Activated CD8-positive, alpha-beta T cell treated with anti-CD3 and anti-CD28 coated beads for 36 hours (primary cell): ENCODE measurements at regions of chr19 and their contacts with region 1.

Region 1: DNA sequence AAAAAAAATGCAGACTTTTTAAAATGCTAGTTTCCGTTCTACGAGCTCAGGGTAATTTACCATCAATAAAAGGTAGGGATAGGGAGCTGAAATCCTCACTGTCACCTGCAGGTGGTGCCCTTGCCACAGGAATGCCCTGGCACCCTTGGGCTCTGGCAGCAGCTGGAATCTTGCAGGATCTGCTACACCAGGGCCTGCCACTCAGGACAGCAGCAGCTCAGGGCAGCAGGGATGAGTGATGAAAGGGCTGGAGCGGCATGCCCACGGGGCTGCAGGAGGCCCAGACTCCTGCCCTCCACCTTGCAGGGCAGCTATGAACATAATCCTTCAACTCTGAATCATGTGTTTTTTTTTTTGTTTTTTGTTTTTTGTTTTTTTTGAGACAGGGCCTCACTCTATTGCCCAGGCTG is 54.0 kb downstream of the GNG7 start:
- DNase-seq: peak; percentile 83
- ATAC-seq: peak; percentile 87
- H3K4me3 Mint-ChIP-seq: no peak overlapping the region
- H3K27ac Mint-ChIP-seq: no peak overlapping the region
- H3K4me1 Mint-ChIP-seq: no peaks in the 10 kb centered on the region
- H3K27me3 Mint-ChIP-seq: no peaks in the 10 kb centered on the region
- CTCF ChIP-seq: peak; percentile 98

Region 2: GRCh38 chr19:2570394-2570825 is 78.1 kb before region 1 on chr19:
- CTCF ChIA-PET with region 1: no interaction called
- POLR2A ChIA-PET with region 1: no interaction called
- intact Hi-C with region 1: no loop called
- DNase-seq: no peak
- ATAC-seq: no peak
- H3K4me3 Mint-ChIP-seq: no peak overlapping the region
- H3K27ac Mint-ChIP-seq: no peak overlapping the region
- H3K4me1 Mint-ChIP-seq: peaks cover 12% of the 10 kb centered on the region
- H3K27me3 Mint-ChIP-seq: no peaks in the 10 kb centered on the region
- CTCF ChIP-seq: no peak

Region 3: DNA sequence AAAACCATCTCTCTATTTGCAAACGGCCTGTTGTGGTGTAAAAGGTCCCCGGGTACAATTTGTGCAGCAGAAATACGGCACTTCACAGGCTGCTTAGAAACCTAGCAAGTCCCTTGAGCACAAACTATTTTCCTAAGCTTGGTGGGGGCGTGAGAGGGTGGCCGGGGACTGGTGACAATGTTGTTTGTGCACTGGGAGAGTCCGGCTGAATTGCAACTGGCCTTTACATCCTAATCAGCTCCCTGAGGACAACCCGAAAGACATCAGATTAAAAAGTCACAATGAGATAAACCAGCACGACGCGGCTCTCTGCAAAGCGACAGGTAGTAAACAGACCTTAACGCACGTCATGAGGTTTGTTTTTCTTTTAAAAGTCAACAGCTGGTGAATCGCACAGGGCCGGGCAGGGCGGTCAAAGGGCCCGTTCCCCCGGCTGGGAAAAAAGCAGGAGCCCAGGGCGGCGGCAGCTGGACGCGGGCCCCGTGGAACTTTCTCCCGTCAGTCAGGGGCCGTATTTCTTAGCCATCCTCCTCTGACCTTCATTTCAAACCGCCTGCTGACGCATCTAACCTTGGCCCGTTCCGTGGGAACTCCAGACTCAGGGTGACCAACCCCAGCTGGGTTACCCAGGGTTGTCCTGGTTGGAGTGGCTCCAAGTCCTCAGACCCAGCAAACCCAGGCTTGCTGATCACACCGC is 60.3 kb before region 1 on chr19:
- CTCF ChIA-PET with region 1: no interaction called
- POLR2A ChIA-PET with region 1: no interaction called
- intact Hi-C with region 1: no loop called
- DNase-seq: no peak
- ATAC-seq: no peak
- H3K4me3 Mint-ChIP-seq: no peak overlapping the region
- H3K27ac Mint-ChIP-seq: no peak overlapping the region
- H3K4me1 Mint-ChIP-seq: no peaks in the 10 kb centered on the region
- H3K27me3 Mint-ChIP-seq: peaks cover 8% of the 10 kb centered on the region
- CTCF ChIP-seq: no peak

Region 4: DNA sequence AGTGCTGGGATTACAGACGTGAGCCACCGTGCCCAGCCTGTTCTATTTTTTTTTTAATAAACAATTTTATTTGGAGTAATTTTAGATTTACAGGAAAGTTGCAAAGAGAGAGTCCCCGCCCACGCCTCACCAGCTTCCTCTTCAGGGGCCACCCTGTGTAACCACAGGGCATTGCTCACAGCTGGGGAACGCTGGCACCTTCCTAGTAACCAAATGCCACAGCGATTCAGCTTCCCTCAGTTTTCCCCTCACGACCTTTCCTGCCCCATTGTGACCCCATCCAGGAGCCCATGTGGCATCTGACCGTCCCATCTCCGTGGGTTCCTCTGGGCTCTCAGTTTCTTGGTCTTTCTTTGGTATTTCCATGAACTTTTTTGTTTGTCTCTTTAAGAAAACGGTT is 29.9 kb before region 1 on chr19:
- CTCF ChIA-PET with region 1: interaction called, 11 read pairs
- POLR2A ChIA-PET with region 1: no interaction called
- intact Hi-C with region 1: no loop called
- DNase-seq: peak; percentile 95
- ATAC-seq: no peak
- H3K4me3 Mint-ChIP-seq: peak overlapping the region; percentile 42
- H3K27ac Mint-ChIP-seq: peak overlapping the region; percentile 86
- H3K4me1 Mint-ChIP-seq: peaks cover 65% of the 10 kb centered on the region
- H3K27me3 Mint-ChIP-seq: no peaks in the 10 kb centered on the region
- CTCF ChIP-seq: no peak

Region 5: DNA sequence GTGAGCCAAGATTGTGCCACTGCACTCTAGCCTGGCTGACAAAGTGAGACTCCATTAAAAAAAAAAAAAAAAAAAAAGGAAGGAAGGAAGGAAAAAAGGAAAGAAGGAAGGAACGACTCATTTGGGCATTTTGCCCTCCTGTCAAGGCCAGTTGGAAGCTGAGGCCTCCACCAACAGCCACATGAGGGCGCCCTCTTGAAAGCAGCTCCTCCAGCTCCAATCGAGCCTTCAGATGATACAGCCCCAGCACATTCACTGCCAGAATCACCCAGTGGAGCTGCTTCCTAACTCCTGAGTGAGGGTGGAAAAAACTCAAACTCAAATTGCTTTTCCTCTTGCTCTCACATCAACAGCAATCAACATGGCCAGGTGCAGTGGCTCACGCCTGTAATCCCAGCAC is 13.1 kb after region 1 on chr19:
- CTCF ChIA-PET with region 1: interaction called, 32 read pairs
- POLR2A ChIA-PET with region 1: no interaction called
- intact Hi-C with region 1: no loop called
- DNase-seq: peak; percentile 60
- ATAC-seq: no peak
- H3K4me3 Mint-ChIP-seq: no peak overlapping the region
- H3K27ac Mint-ChIP-seq: no peak overlapping the region
- H3K4me1 Mint-ChIP-seq: no peaks in the 10 kb centered on the region
- H3K27me3 Mint-ChIP-seq: no peaks in the 10 kb centered on the region
- CTCF ChIP-seq: no peak

Region 6: DNA sequence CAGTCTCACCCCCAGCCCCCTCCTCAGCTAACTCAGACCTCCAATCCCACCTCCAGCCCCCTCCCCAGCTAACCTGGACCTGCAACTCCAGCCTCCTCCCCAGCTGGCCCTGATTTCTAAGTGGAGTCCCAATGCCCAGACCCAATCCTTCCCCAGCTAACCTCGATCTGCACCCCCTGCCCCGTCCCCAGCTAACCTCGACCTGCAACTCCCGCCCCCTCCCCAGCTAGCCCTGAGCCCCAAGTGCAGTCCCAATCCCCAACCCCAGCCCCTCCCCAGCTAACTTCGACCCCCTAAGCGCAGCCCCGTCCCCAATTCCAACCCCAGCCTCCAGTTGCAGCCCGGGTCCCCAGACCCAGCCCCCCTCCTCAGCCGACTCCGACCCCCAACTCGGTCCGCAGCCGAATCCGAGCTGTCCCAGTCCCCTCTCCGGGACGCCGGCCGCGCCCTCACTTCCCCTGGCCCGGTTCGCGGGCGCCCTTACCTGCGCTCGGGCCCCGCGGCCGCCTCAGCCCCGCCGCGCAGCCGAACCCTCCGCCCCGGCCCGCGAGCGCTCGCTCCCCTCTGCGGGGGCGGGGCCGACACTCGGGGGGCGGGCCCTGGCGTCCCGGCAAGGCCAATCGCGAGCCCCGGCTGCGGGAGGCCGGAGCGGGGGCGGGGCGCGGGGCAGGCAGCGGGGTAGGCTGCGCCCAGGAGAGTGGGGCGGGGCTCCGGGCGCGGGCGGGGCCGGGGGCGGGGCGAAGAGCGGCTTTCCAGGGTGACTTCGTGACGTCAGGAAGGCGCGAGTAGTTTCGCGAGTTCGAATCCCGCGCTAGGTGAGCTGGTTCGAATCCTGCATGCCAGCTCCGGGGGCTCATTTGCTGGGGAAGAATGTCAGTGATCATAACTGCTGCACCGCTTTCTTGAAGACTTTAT is 53.9 kb after region 1 on chr19 and contains the start of gene GNG7:
- CTCF ChIA-PET with region 1: interaction called, 15 read pairs
- POLR2A ChIA-PET with region 1: no interaction called
- intact Hi-C with region 1: no loop called
- DNase-seq: peak; percentile 95
- ATAC-seq: peak; percentile 100
- H3K4me3 Mint-ChIP-seq: peak within 1 kb of the TSS; percentile 56
- H3K27ac Mint-ChIP-seq: no peak within 1 kb of the TSS
- H3K4me1 Mint-ChIP-seq: peaks cover 17% of the 10 kb centered on the region
- H3K27me3 Mint-ChIP-seq: no peaks in the 10 kb centered on the region
- CTCF ChIP-seq: no peak
- total RNA-seq, gene GNG7: 0.27 to 0.32 TPM

Region 7: DNA sequence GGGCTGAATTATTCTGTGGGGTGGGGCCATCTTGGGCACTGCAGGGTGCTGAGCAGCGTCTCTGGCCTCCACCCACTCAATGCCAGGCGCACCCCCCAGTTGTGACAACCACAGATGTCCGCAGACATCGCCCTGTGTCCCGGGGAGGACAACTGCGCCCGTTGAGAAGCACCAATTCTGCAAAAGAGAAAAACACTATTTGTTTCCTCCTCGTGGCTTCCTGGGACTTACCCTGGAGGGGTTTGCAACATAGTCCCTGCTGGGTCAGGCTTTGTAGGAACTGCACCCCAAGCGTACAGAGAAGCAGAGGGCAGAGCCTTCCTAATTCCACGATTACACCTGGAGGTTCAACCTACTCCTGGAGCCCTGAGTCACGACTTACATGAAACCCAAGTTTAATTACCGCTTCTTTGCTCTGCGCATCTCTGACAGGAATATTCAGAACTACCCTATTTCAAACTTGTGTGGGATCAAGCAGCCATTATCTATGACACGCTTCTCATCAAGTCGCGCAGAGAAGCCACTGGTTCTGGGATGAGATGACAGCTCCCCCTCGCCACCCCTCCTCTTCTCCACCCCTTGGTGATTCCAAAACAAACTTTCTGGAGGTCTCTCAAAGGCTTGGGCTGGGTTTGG is 102.4 kb after region 1 on chr19:
- CTCF ChIA-PET with region 1: interaction called, 51 read pairs
- POLR2A ChIA-PET with region 1: no interaction called
- intact Hi-C with region 1: loop called (anchors 5 kb)
- DNase-seq: no peak
- ATAC-seq: no peak
- H3K4me3 Mint-ChIP-seq: no peak overlapping the region
- H3K27ac Mint-ChIP-seq: no peak overlapping the region
- H3K4me1 Mint-ChIP-seq: peaks cover 13% of the 10 kb centered on the region
- H3K27me3 Mint-ChIP-seq: peaks cover 2% of the 10 kb centered on the region
- CTCF ChIP-seq: no peak

Region 8: DNA sequence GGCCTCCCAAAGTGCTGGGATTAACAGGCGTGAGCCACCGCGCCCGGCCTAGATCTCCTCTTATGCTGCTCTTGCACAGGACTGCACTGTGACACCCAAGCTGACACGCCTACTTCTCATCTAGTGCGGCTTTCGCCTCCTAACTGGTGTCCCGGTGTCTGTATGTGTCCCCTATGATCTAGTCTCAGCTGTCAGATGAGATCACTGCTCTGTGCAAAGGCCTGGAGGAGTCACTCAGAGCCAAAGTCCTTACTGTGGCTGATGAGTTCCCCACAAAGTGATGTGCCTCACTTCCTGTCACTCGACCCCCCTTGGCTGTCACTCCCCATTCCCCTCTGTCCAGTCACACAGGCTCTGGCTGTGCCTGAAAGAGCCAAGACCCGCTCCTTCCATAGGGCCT is 221.1 kb after region 1 on chr19:
- CTCF ChIA-PET with region 1: interaction called, 21 read pairs
- POLR2A ChIA-PET with region 1: no interaction called
- intact Hi-C with region 1: loop called (anchors 5 kb)
- DNase-seq: no peak
- ATAC-seq: peak; percentile 55
- H3K4me3 Mint-ChIP-seq: no peak overlapping the region
- H3K27ac Mint-ChIP-seq: no peak overlapping the region
- H3K4me1 Mint-ChIP-seq: no peaks in the 10 kb centered on the region
- H3K27me3 Mint-ChIP-seq: peaks cover 2% of the 10 kb centered on the region
- CTCF ChIP-seq: no peak